ENCODE measurements at regions of chr13 and their contacts with region 1.

Region 1: GRCh38 chr13:34076943-34077703 is 259.2 kb downstream of the RFC3 start:
- DNase-seq: peak in 1 of 7 donors; percentile 24
- H3K4me3 ChIP-seq: peak overlapping the region in 1 of 4 donors; percentile 37
- H3K27ac ChIP-seq: peak overlapping the region in 1 of 5 donors; percentile 51
- H3K4me1 ChIP-seq: peaks cover 3 to 15% of the 10 kb centered on the region in 2 donors
- H3K27me3 ChIP-seq: no peaks in the 10 kb centered on the region
- CTCF ChIP-seq: peak; percentile 54 to 89 (median 74)
- POLR2A ChIP-seq: no peak

Region 2: DNA sequence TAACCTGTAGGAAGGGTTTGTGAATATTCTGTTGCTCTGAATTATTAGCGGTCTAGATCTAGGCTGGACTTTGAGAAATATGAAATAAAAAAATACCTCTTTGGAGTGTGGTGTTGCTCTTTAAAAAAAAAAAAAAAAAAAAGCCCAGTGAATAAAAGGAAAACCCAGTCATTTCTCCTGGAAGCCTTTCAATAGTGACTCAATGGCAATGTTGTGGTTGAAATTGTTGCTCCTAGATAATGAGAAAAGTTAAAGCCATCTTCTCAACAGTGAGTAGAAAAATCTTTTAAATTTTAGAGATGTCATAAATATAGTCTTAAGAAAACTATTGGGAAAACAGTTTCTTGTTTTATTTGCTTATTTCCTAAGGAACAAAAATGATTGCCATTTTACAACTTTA is 123.9 kb before region 1 on chr13:
- intact Hi-C with region 1: loop called in 1 of 2 experiments (anchors 10 kb)
- DNase-seq: no peak
- H3K4me3 ChIP-seq: no peak overlapping the region
- H3K27ac ChIP-seq: no peak overlapping the region
- H3K4me1 ChIP-seq: no peaks in the 10 kb centered on the region
- H3K27me3 ChIP-seq: no peaks in the 10 kb centered on the region
- CTCF ChIP-seq: no peak
- POLR2A ChIP-seq: no peak